ENCODE measurements at regions of chr11 and their contacts with region 1.

Region 1: GRCh38 chr11:86162239-86162638 is 82.3 kb upstream of the EED start:
- DNase-seq: no peak
- CTCF ChIP-seq: no peak

Region 2: GRCh38 chr11:86013713-86014112 is 148.5 kb before region 1 on chr11:
- CTCF ChIA-PET with region 1: no interaction called
- POLR2A ChIA-PET with region 1: interaction called, 14 read pairs
- DNase-seq: no peak
- CTCF ChIP-seq: no peak

Region 3: DNA sequence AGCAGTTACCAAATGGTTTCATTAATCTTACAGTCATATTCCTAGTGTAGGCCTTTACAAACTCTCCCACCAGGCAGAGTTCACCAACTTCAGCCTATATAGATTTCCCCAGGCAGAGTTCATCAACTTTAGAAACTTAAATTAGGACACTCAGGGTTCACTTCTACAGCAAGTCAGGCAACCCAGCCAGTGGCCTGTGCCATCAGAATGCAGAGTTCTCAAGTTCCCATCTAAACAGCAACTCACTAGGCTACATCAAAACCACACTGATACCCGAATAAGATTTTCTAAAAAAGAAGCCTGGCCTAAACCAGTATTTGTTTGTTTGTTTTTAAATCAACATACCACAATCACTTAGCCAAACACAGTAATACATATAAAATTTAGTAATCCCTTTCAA is 127.1 kb before region 1 on chr11:
- CTCF ChIA-PET with region 1: no interaction called
- POLR2A ChIA-PET with region 1: no interaction called
- DNase-seq: no peak
- CTCF ChIP-seq: no peak

Region 4: GRCh38 chr11:86174101-86175046 is 12.1 kb after region 1 on chr11:
- CTCF ChIA-PET with region 1: interaction called, 13 read pairs
- POLR2A ChIA-PET with region 1: no interaction called
- DNase-seq: no peak
- CTCF ChIP-seq: no peak

Region 5: GRCh38 chr11:86274503-86274902 is 112.3 kb after region 1 on chr11:
- CTCF ChIA-PET with region 1: no interaction called
- POLR2A ChIA-PET with region 1: no interaction called
- DNase-seq: no peak
- CTCF ChIP-seq: no peak

Measured in GM10248 (cell line).